ENCODE measurements at regions of chr10 and their contacts with region 1.

Region 1: DNA sequence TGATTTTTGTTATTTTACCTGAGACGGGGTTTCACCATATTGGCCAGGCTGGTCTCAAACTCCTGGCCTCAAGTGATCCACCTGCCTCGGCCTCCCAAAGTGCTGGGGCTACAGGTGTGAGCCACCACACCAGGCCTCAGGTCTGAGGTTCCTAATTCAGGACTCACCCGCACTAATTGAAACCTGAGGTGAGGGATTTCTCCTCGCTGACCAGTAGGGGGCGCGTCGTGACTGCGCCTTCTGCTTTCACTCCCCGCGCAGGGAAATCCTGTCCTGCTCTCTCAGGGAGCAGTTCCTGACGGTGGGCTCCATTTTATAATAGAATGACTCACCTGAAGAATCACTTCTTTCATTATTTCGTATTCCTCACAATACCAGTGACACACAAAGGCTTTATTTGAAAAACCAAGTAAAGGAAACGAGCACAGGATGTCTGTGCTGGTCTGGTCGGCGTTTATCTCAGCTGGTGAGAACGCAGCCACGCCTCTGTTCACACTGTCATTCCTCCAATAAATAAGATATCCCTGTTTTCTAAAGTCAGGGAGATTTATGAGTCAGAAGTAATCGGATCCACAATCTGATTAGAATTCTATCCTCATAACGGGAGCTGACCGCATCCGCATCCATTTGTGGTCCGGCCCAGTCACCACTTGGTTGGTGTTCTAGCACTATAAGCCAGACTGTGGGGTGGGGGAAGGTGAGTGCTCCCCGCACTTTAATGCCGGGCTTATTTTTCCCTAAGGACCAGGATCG is 35.4 kb downstream of the BAG3 start:
- DNase-seq: peak; percentile 58 to 93 (median 84)

Region 2: DNA sequence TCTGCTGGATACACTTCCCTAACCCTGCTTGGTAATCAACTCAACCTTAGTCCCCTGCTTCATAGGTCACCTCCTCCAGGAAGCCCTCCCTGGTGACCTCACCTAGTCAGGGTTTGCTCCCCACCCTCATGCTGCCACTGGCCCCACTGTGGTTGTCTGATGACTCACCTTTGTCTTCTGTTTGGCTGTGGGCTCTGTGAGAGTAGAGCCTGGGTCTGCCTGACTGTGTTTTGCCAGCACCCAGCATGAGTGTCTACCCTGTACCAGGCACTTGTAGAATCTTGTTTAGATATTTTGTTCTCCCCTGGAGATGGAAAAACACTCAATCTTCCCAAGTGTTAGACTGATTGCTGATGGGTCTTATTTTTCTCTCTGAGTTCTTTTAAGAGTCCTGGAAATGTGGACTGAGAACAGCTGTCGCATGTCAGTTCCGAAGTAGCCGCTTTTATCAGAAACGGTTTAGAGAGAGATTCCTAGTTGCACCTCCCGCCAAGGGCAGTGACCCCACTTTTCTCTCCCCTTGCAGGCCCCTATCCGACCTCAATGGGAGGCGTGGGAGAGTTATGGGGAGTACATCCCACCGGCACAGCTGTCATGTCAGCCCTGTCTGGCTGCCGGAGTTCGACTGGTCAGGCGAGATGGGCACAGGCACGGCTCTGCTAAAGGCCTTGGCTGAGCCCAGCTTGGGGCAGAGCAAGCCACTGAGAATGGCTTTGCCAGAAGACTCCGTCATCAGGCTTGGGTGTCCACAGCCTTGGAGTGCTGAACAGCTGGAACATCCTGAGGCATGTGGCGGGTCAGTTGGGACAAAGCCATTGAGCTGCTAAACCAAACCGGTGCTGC is 344.9 kb before region 1 on chr10:
- intact Hi-C with region 1: no loop called
- DNase-seq: no peak

Region 3: GRCh38 chr10:119725828-119726675 is 39.4 kb after region 1 on chr10 and contains the start of gene INPP5F:
- intact Hi-C with region 1: loop called (anchors 2 kb)
- DNase-seq: peak; percentile 93 to 100 (median 99)

Region 4: GRCh38 chr10:119750391-119751230 is 64.0 kb after region 1 on chr10:
- intact Hi-C with region 1: loop called (anchors 10 kb)
- DNase-seq: peak; percentile 40 to 92 (median 84)

Region 5: DNA sequence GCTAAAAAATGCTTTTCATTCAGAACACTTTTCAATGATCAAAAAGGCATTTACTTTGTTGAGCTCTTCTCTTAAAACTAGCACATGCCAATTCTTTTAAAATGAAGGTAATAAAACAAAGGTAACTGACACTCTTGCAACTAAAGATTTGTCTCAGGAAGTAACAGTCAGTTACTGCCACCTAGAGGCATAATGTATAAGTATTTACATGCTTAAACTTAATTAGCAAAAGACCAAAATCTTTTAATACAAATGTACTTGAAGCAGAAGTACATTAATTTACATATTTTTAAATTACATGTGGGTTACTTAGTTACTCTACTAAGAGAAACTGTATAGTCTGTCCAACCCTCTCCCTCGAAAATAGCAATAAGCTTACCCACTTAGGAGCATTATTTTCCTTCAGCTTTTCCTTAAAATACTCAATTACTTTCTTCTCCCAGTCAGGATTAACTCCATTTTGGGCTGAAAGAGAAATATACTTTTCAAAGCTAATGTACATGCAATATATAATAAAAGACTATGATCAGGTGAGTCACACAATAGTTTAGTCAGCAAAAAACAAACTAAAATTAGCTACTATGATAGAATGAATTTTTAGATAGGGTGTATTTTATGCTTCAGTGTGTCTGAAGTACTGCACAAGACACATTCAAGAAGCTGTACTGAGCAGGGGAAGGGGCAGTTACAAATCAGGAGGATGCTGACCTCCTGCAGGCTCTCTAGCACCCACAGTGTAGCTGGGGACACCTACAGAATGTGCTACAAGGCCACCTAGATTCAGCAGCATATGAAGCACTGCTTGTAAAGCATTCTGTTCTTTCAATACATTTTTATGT is 173.0 kb after region 1 on chr10:
- intact Hi-C with region 1: loop called (anchors 5 kb)
- DNase-seq: no peak

Measured in head of caudate nucleus (tissue), 42 donors.